ENCODE measurements at regions of chr15 and their contacts with region 1.

Region 1: DNA sequence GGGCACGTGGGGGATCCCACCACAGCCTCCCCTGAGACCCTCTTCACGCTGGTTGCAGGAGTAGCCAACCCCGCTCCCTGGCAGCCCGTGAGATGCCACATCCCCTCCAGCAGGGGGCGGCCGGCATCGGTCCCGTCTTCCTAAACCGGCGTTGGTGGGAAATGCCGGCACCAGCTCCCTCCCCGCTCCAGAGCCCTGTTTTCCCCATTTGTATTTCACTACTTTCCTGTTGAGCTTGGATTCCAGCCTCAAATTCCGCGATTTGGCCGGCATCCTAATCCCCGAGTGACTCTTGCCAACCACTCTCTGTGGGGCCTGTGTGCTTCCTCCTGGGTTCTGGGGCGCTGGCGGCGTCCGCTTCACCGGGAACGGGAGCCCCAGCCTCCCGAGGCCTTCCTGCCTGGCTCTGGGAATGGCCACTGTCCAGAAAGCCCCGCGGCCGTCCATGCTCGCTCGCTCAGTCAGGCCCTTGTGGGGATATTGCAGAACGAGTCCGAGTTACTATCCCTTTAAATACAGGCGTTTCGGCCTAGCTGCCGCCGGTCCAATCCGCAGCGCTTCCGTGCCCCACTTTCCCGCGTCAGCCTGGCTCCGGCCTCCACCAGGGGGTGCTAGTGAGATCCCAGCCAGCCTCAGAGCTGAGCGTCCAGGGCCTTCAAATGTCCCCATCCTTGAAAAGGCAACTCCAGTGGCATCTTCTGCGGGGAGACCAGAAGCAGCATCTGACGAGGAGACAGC is 8.1 kb upstream of the ADAMTS17 start:
- DNase-seq: peak; percentile 65 to 91 (median 85)
- ATAC-seq: peak; percentile 92
- H3K4me3 ChIP-seq: peak overlapping the region; percentile 88 to 99
- H3K4me3 Mint-ChIP-seq: peak overlapping the region; percentile 94
- H3K27ac ChIP-seq: peak overlapping the region; percentile 54 to 80
- H3K27ac Mint-ChIP-seq: peak overlapping the region; percentile 87
- H3K4me1 ChIP-seq: peaks cover 9% of the 10 kb centered on the region
- H3K4me1 Mint-ChIP-seq: peaks cover 9% of the 10 kb centered on the region
- H3K27me3 ChIP-seq: no peaks in the 10 kb centered on the region
- H3K27me3 Mint-ChIP-seq: peaks cover 20% of the 10 kb centered on the region
- CTCF ChIP-seq: peak; percentile 78

Region 2: GRCh38 chr15:99565299-99566156 is 784.3 kb before region 1 on chr15 and contains the start of gene MEF2A:
- CTCF ChIA-PET with region 1: no interaction called
- POLR2A ChIA-PET with region 1: no interaction called
- intact Hi-C with region 1: loop called in 1 of 2 experiments (anchors 10 kb)
- DNase-seq: peak; percentile 81 to 96 (median 91)
- ATAC-seq: peak; percentile 66
- H3K4me3 ChIP-seq: peak within 1 kb of the TSS; percentile 74 to 91
- H3K4me3 Mint-ChIP-seq: peak within 1 kb of the TSS; percentile 96
- H3K27ac ChIP-seq: peak within 1 kb of the TSS; percentile 64 to 90
- H3K27ac Mint-ChIP-seq: peak within 1 kb of the TSS; percentile 96
- H3K4me1 ChIP-seq: peaks cover 40% of the 10 kb centered on the region
- H3K4me1 Mint-ChIP-seq: peaks cover 55% of the 10 kb centered on the region
- H3K27me3 ChIP-seq: no peaks in the 10 kb centered on the region
- H3K27me3 Mint-ChIP-seq: no peaks in the 10 kb centered on the region
- CTCF ChIP-seq: no peak
- total RNA-seq, gene MEF2A: 20.3 to 24.9 TPM

Region 3: GRCh38 chr15:100075229-100075628 is 274.6 kb before region 1 on chr15:
- CTCF ChIA-PET with region 1: no interaction called
- POLR2A ChIA-PET with region 1: no interaction called
- intact Hi-C with region 1: no loop called
- DNase-seq: no peak
- ATAC-seq: no peak
- H3K4me3 ChIP-seq: no peak overlapping the region
- H3K4me3 Mint-ChIP-seq: no peak overlapping the region
- H3K27ac ChIP-seq: no peak overlapping the region
- H3K27ac Mint-ChIP-seq: no peak overlapping the region
- H3K4me1 ChIP-seq: no peaks in the 10 kb centered on the region
- H3K4me1 Mint-ChIP-seq: no peaks in the 10 kb centered on the region
- H3K27me3 ChIP-seq: no peaks in the 10 kb centered on the region
- H3K27me3 Mint-ChIP-seq: no peaks in the 10 kb centered on the region
- CTCF ChIP-seq: no peak

Region 4: DNA sequence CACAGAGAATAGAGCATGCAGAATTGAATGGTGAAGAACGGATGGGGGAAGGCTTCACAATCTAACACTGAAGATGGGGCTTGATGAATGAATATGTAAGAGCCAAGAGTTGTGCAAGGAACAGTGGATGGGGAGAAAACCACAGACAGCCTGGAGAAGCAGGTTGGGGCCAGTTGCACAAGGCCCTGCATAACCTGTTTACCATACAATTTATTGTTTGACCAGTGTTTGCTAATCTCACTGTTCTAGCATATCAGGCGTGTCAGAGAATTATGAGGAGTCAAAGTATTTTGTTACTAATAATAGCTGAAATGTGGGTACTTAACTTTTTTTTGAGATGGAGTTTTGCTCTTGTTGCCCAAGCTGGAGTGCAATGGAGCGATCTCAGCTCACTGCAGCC is 215.7 kb after region 1 on chr15:
- CTCF ChIA-PET with region 1: interaction called, 114 read pairs
- POLR2A ChIA-PET with region 1: interaction called, 3 read pairs
- intact Hi-C with region 1: no loop called
- DNase-seq: no peak
- ATAC-seq: no peak
- H3K4me3 ChIP-seq: no peak overlapping the region
- H3K4me3 Mint-ChIP-seq: no peak overlapping the region
- H3K27ac ChIP-seq: no peak overlapping the region
- H3K27ac Mint-ChIP-seq: peak overlapping the region; percentile 13
- H3K4me1 ChIP-seq: peaks cover 5% of the 10 kb centered on the region
- H3K4me1 Mint-ChIP-seq: peaks cover 13% of the 10 kb centered on the region
- H3K27me3 ChIP-seq: no peaks in the 10 kb centered on the region
- H3K27me3 Mint-ChIP-seq: no peaks in the 10 kb centered on the region
- CTCF ChIP-seq: no peak

Region 5: GRCh38 chr15:100602064-100602822 is 252.4 kb after region 1 on chr15 and contains the starts of genes ASB7 and LINS1:
- CTCF ChIA-PET with region 1: interaction called, 30 read pairs
- POLR2A ChIA-PET with region 1: interaction called, 4 read pairs
- intact Hi-C with region 1: loop called in 1 of 2 experiments (anchors 1 kb)
- DNase-seq: peak; percentile 99 to 100 (median 100)
- ATAC-seq: peak; percentile 89
- H3K4me3 ChIP-seq: peak within 1 kb of the TSS; percentile 90 to 95
- H3K4me3 Mint-ChIP-seq: no peak within 1 kb of the TSS
- H3K27ac ChIP-seq: peak within 1 kb of the TSS; percentile 71 to 94
- H3K27ac Mint-ChIP-seq: peak within 1 kb of the TSS; percentile 93
- H3K4me1 ChIP-seq: peaks cover 58% of the 10 kb centered on the region
- H3K4me1 Mint-ChIP-seq: peaks cover 64% of the 10 kb centered on the region
- H3K27me3 ChIP-seq: no peaks in the 10 kb centered on the region
- H3K27me3 Mint-ChIP-seq: no peaks in the 10 kb centered on the region
- CTCF ChIP-seq: no peak
- total RNA-seq, gene ASB7: 17.2 to 19.9 TPM
- total RNA-seq, gene LINS1: 42.8 to 45.9 TPM

Region 6: GRCh38 chr15:101277038-101277882 is 927.4 kb after region 1 on chr15 and contains the start of gene SELENOS:
- CTCF ChIA-PET with region 1: no interaction called
- POLR2A ChIA-PET with region 1: no interaction called
- intact Hi-C with region 1: loop called in 1 of 2 experiments (anchors 10 kb)
- DNase-seq: peak; percentile 62 to 94 (median 88)
- ATAC-seq: peak; percentile 93
- H3K4me3 ChIP-seq: peak within 1 kb of the TSS; percentile 75 to 77
- H3K4me3 Mint-ChIP-seq: peak within 1 kb of the TSS; percentile 95
- H3K27ac ChIP-seq: peak within 1 kb of the TSS; percentile 65 to 77
- H3K27ac Mint-ChIP-seq: peak within 1 kb of the TSS; percentile 93
- H3K4me1 ChIP-seq: peaks cover 16% of the 10 kb centered on the region
- H3K4me1 Mint-ChIP-seq: peaks cover 24% of the 10 kb centered on the region
- H3K27me3 ChIP-seq: no peaks in the 10 kb centered on the region
- H3K27me3 Mint-ChIP-seq: no peaks in the 10 kb centered on the region
- CTCF ChIP-seq: no peak
- total RNA-seq, gene SELENOS: 46.0 to 50.4 TPM

Region 7: GRCh38 chr15:101723874-101724674 is 1374.2 kb after region 1 on chr15 and contains the start of gene TARS3:
- CTCF ChIA-PET with region 1: no interaction called
- POLR2A ChIA-PET with region 1: no interaction called
- intact Hi-C with region 1: loop called in 1 of 2 experiments (anchors 10 kb)
- DNase-seq: peak; percentile 94 to 98 (median 96)
- ATAC-seq: peak; percentile 93
- H3K4me3 ChIP-seq: peak within 1 kb of the TSS; percentile 40 to 71
- H3K4me3 Mint-ChIP-seq: peak within 1 kb of the TSS; percentile 90
- H3K27ac ChIP-seq: peak within 1 kb of the TSS; percentile 65 to 87
- H3K27ac Mint-ChIP-seq: peak within 1 kb of the TSS; percentile 90
- H3K4me1 ChIP-seq: peaks cover 18% of the 10 kb centered on the region
- H3K4me1 Mint-ChIP-seq: peaks cover 35% of the 10 kb centered on the region
- H3K27me3 ChIP-seq: no peaks in the 10 kb centered on the region
- H3K27me3 Mint-ChIP-seq: no peaks in the 10 kb centered on the region
- CTCF ChIP-seq: no peak
- total RNA-seq, gene TARS3: 12.7 to 13.7 TPM

Measured in CD8-positive, alpha-beta T cell (primary cell).